Activated T-helper 1 cell treated with anti-CD3 and anti-CD28 coated beads, Interleukin-12 subunit alpha, Interleukin-12 subunit beta, Interleukin-2, Interleukin-4 antibody, amounts not matched to agents 30 ng/mL and 10 ng/mL and 1 ng/mL, durations not matched to agents 14 hours and 24 hours and 36 hours (primary cell): ENCODE measurements at regions of chr4 and their contacts with region 1.

Region 1: GRCh38 chr4:74444891-74445642 is at the start of gene AREG:
- DNase-seq: peak; percentile 76
- H3K4me3 Mint-ChIP-seq: peak within 1 kb of the TSS; percentile 83
- H3K27ac Mint-ChIP-seq: peak within 1 kb of the TSS; percentile 73
- H3K4me1 Mint-ChIP-seq: peaks cover 14% of the 10 kb centered on the region
- H3K27me3 Mint-ChIP-seq: peaks cover 10% of the 10 kb centered on the region
- total RNA-seq, gene AREG: 1.5 and 2.4 TPM in 2 replicates

Region 2: GRCh38 chr4:74157561-74158465 is 287.3 kb before region 1 on chr4 and contains the start of gene MTHFD2L:
- intact Hi-C with region 1: loop called (anchors 10 kb)
- DNase-seq: peak; percentile 80
- H3K4me3 Mint-ChIP-seq: peak within 1 kb of the TSS; percentile 93
- H3K27ac Mint-ChIP-seq: peak within 1 kb of the TSS; percentile 87
- H3K4me1 Mint-ChIP-seq: peaks cover 30% of the 10 kb centered on the region
- H3K27me3 Mint-ChIP-seq: peaks cover 22% of the 10 kb centered on the region
- total RNA-seq, gene MTHFD2L: 8.9 and 9.9 TPM in 2 replicates

Region 3: GRCh38 chr4:74320559-74321118 is 124.4 kb before region 1 on chr4:
- intact Hi-C with region 1: loop called (anchors 5 kb)
- DNase-seq: no peak
- H3K4me3 Mint-ChIP-seq: no peak overlapping the region
- H3K27ac Mint-ChIP-seq: no peak overlapping the region
- H3K4me1 Mint-ChIP-seq: no peaks in the 10 kb centered on the region
- H3K27me3 Mint-ChIP-seq: peaks cover 14% of the 10 kb centered on the region

Region 4: DNA sequence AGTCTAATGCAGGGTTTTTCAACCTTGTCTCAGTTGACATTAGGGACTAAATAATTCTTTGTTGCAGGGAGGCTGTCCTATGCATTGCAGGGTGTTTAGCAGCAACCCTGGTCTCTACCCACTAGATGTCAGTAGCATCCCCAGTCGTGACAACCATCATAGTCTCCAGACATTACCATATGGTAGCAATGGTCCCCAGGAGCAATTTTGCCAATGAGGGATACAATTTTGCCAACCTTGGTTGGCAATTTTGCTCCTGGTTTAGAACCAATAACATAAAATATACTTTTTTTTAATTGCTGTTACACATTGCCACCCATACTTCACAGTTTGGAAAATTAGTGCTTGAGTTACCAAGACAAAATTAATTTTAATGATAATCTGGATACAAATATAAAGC is 74.2 kb before region 1 on chr4:
- intact Hi-C with region 1: loop called (anchors 2 kb)
- DNase-seq: peak; percentile 1
- H3K4me3 Mint-ChIP-seq: no peak overlapping the region
- H3K27ac Mint-ChIP-seq: no peak overlapping the region
- H3K4me1 Mint-ChIP-seq: peaks cover 5% of the 10 kb centered on the region
- H3K27me3 Mint-ChIP-seq: peaks cover 17% of the 10 kb centered on the region

Region 5: DNA sequence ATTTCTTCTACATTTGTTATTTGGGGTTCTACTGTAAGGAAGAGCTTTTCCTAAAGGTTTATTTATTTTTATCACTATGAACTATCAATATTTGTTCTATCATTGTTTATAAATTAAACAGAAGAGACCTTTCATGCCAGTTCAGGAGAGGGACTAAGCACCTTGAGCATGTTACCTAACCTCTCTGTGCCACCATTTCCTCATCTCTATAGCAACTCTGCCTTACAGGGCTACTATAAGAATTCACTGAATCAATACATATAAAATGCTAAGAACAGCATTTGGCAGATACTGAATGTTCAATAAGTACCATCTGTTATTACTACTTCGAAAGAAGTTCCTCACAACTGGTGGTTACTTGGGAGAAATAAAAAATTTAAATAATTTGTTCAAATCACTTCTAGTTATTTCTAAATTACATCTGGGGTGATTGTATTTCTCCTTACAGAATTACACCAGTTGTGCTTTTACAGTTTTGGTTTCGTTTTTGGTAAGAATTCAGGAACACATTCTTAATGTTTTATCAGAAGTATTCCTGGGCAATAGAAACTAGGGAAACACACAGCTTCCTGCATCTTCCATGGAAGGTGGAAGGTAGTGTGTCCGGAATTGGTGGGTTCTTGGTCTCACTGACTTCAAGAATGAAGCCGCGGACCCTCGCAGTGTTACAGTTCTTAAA is 47.2 kb before region 1 on chr4:
- intact Hi-C with region 1: loop called (anchors 1 kb)
- DNase-seq: no peak
- H3K4me3 Mint-ChIP-seq: peak overlapping the region; percentile 89
- H3K27ac Mint-ChIP-seq: peak overlapping the region; percentile 83
- H3K4me1 Mint-ChIP-seq: peaks cover 8% of the 10 kb centered on the region
- H3K27me3 Mint-ChIP-seq: peaks cover 9% of the 10 kb centered on the region

Region 6: DNA sequence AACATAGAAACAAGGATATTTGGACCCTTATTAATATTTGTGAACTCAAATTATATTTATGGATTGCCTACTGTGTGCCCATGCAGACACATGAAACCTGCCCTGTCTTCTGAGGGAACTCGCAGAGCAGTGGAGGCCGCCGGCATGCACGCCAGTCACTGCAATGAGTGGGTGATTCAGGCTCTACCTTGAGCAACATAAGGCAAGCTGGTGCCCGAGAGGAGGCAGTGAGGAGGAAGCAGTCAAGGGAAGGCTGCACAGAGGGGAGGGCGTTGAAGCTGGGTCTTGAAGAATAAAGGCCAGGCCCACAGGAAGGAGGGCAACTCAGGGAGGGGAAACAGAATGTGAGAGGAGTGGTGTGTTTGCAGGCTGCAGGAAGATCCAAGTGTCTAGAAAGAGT is 1404.4 kb after region 1 on chr4:
- intact Hi-C with region 1: loop called (anchors 5 kb)
- DNase-seq: no peak
- H3K4me3 Mint-ChIP-seq: no peak overlapping the region
- H3K27ac Mint-ChIP-seq: peak overlapping the region; percentile 19
- H3K4me1 Mint-ChIP-seq: peaks cover 12% of the 10 kb centered on the region
- H3K27me3 Mint-ChIP-seq: no peaks in the 10 kb centered on the region